ENCODE measurements at regions of chr15 and their contacts with region 1.

Region 1: GRCh38 chr15:42385206-42385979 is 26.1 kb downstream of the CAPN3 start:
- DNase-seq: no peak
- H3K4me3 ChIP-seq: no peak overlapping the region
- CTCF ChIP-seq: peak; percentile 77

Region 2: DNA sequence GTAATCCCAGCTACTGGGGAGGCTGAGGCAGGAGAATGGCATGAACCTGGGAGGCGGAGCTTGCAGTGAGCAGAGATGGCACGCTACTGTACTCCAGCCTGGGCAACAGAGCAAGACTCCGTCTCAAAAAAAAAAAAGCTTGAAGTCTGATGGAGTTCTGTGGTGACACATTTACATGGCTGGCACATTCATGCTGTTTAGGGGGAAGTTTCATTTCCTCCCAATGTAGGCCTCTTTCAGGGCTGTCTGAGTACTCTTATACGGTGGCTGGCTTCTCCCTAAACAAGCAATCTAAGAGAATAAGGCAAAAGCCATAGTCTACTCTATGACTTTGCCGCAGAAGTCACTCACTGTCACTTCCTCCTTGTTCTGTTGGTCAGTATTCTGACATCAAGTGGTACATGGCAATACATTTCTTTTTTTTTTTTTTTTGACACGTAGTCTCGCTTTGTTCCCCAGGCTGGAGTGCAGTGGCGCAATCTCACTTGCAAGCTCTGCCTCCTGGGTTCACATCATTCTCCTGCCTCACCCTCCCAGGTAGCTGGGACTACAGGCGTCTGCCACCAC is 1094.2 kb before region 1 on chr15:
- CTCF ChIA-PET with region 1: no interaction called
- POLR2A ChIA-PET with region 1: no interaction called
- DNase-seq: no peak
- H3K4me3 ChIP-seq: no peak overlapping the region
- CTCF ChIP-seq: no peak

Region 3: GRCh38 chr15:42207674-42208579 is 177.5 kb before region 1 on chr15 and contains the start of gene VPS39:
- CTCF ChIA-PET with region 1: interaction called, 15 read pairs
- POLR2A ChIA-PET with region 1: no interaction called
- DNase-seq: peak; percentile 34
- H3K4me3 ChIP-seq: peak within 1 kb of the TSS; percentile 79
- CTCF ChIP-seq: no peak

Region 4: DNA sequence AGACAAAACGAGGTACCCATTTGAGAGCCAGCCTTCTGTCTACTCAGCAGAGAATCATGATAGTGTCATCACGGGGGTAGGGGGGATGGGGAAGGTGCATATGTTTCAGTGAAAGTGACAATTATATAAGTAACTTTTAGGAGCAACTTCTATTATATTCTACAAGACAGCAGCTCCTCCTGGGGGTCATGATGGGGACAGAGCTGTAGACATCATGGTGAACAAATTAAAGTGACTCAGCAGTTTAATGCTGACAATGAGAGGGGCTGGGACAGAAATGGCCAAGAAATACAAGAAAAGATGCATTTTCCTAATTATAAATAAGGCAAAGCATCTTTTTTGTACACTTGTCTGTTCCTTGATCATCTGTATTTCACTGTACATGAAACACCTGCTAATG is 14.3 kb before region 1 on chr15:
- CTCF ChIA-PET with region 1: interaction called, 14 read pairs
- POLR2A ChIA-PET with region 1: no interaction called
- DNase-seq: no peak
- H3K4me3 ChIP-seq: no peak overlapping the region
- CTCF ChIP-seq: no peak

Region 5: GRCh38 chr15:42401544-42402454 is 16.4 kb after region 1 on chr15:
- CTCF ChIA-PET with region 1: interaction called, 58 read pairs
- POLR2A ChIA-PET with region 1: no interaction called
- DNase-seq: no peak
- H3K4me3 ChIP-seq: no peak overlapping the region
- CTCF ChIP-seq: no peak

Region 6: DNA sequence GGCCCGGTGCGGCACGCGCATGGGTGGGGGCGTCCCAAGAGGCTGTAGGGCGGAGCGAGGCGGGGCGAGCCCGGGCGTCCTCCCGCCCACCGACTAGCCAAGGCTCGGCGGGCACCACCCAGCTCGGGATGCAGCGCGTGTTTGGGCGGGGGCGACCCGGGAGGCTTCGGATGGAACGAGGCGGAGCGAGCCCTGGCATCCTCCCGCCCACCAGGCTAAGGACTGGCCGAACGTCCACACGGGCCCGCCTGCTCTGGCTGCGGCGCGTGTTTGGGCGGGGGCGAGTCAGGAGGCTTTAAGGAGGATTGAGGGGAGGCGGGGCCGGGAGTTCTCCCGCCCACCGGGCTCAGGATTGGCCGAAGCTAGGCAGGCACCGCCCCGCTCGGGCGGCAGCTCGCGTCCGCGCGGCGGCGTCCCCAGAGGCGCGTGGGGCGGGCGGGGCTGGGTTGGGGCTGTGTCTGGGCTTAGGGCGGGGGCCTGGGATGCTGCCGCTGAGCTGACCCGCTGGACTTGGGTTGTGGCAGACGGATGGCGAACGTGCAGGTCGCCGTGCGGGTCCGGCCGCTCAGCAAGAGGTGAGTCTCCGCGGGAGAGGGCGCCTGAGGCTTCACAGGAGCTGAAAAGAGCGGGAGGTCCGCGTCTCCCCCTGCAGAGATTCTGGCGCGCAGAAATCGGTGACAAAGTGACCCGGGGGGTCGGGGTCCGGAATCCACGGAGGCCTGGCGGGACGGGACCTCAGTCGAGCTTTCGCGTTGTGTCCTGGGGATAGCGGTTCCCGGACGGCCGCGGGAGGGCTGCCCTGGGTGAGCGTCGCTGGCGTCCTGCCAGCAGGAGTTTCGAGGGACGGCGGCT is 190.0 kb after region 1 on chr15 and contains the start of gene STARD9:
- CTCF ChIA-PET with region 1: no interaction called
- POLR2A ChIA-PET with region 1: no interaction called
- DNase-seq: peak; percentile 82
- H3K4me3 ChIP-seq: peak within 1 kb of the TSS; percentile 84
- CTCF ChIP-seq: no peak

Region 7: GRCh38 chr15:42819786-42820185 is 434.4 kb after region 1 on chr15:
- CTCF ChIA-PET with region 1: no interaction called
- POLR2A ChIA-PET with region 1: no interaction called
- DNase-seq: no peak
- H3K4me3 ChIP-seq: no peak overlapping the region
- CTCF ChIP-seq: no peak

Measured in AG04449 (cell line).